CD4-positive, alpha-beta memory T cell (primary cell): ENCODE measurements at regions of chr1 and their contacts with region 1.

Region 1: GRCh38 chr1:44377925-44378784 is 23.1 kb upstream of the ERI3 start:
- DNase-seq: peak; percentile 17 to 44 (median 22)
- H3K4me3 ChIP-seq: no peak overlapping the region
- H3K4me3 Mint-ChIP-seq: no peak overlapping the region
- H3K27ac ChIP-seq: no peak overlapping the region
- H3K27ac Mint-ChIP-seq: no peak overlapping the region
- H3K4me1 ChIP-seq: no peaks in the 10 kb centered on the region
- H3K4me1 Mint-ChIP-seq: no peaks in the 10 kb centered on the region
- H3K27me3 ChIP-seq: no peaks in the 10 kb centered on the region
- H3K27me3 Mint-ChIP-seq: peaks cover 0 to 7% of the 10 kb centered on the region in 2 donors

Region 2: DNA sequence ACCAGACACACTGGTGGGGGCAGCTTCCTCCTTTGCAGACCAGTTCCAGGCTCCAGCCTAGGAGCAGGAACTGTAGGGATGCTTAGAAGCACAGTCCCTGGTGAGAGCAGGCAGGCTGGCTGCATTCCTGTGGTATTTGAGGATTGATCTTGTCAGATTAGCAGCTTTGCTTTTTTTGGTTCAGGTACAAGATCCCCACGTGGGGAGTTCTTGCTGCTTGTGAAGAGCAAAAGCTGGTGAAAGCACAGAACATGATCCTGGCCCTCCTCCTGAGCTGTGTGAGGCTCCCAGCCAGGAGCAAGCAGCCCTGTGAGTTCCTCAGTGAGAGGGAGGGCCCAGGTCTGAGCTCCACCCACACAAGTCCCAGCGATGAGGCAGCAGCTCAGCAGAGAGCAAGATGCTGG is 519.8 kb before region 1 on chr1:
- CTCF ChIA-PET with region 1: no interaction called
- POLR2A ChIA-PET with region 1: no interaction called
- intact Hi-C with region 1: no loop called
- DNase-seq: no peak
- H3K4me3 ChIP-seq: no peak overlapping the region
- H3K4me3 Mint-ChIP-seq: no peak overlapping the region
- H3K27ac ChIP-seq: no peak overlapping the region
- H3K27ac Mint-ChIP-seq: no peak overlapping the region
- H3K4me1 ChIP-seq: no peaks in the 10 kb centered on the region
- H3K4me1 Mint-ChIP-seq: peaks cover 0 to 5% (median 3%) of the 10 kb centered on the region in 4 donors
- H3K27me3 ChIP-seq: no peaks in the 10 kb centered on the region
- H3K27me3 Mint-ChIP-seq: no peaks in the 10 kb centered on the region

Region 3: DNA sequence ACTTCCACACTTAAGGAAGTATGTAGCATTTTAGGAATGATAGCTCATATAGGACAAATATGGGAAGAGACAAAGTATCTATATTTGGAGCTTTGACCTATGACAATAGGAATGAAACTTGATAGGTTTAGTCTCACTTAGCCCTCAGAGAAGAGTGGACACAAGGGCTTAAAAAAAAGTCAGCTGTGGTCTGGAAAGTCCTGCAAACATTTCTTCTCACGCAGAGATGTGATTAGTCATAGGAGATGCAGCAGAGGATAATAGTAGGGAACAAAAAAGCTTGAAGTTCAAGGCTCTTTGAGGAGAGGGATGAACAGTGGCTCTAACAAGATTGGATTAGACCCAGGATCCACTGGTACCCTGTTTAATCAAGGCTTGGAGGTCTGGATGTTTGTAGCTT is 12.1 kb after region 1 on chr1:
- CTCF ChIA-PET with region 1: interaction called, 13 read pairs
- POLR2A ChIA-PET with region 1: no interaction called
- intact Hi-C with region 1: no loop called
- DNase-seq: no peak
- H3K4me3 ChIP-seq: no peak overlapping the region
- H3K4me3 Mint-ChIP-seq: no peak overlapping the region
- H3K27ac ChIP-seq: no peak overlapping the region
- H3K27ac Mint-ChIP-seq: no peak overlapping the region
- H3K4me1 ChIP-seq: no peaks in the 10 kb centered on the region
- H3K4me1 Mint-ChIP-seq: no peaks in the 10 kb centered on the region
- H3K27me3 ChIP-seq: no peaks in the 10 kb centered on the region
- H3K27me3 Mint-ChIP-seq: peaks cover 17 to 18% of the 10 kb centered on the region in 2 donors

Region 4: GRCh38 chr1:44594871-44595746 is 217.0 kb after region 1 on chr1:
- CTCF ChIA-PET with region 1: interaction called, 38 read pairs
- POLR2A ChIA-PET with region 1: no interaction called
- intact Hi-C with region 1: loop called (anchors 1 kb)
- DNase-seq: peak; percentile 51 to 64 (median 57)
- H3K4me3 ChIP-seq: no peak overlapping the region
- H3K4me3 Mint-ChIP-seq: no peak overlapping the region
- H3K27ac ChIP-seq: no peak overlapping the region
- H3K27ac Mint-ChIP-seq: no peak overlapping the region
- H3K4me1 ChIP-seq: no peaks in the 10 kb centered on the region
- H3K4me1 Mint-ChIP-seq: no peaks in the 10 kb centered on the region
- H3K27me3 ChIP-seq: peaks cover 3% of the 10 kb centered on the region
- H3K27me3 Mint-ChIP-seq: peaks cover 7 to 8% of the 10 kb centered on the region in 2 donors